Activated T-helper 1 cell treated with anti-CD3 and anti-CD28 coated beads, Interleukin-12 subunit alpha, Interleukin-12 subunit beta, Interleukin-2, Interleukin-4 antibody, amounts not matched to agents 30 ng/mL and 10 ng/mL and 1 ng/mL, durations not matched to agents 14 hours and 24 hours and 36 hours (primary cell): ENCODE measurements at regions of chr5 and their contacts with region 1.

Region 1: DNA sequence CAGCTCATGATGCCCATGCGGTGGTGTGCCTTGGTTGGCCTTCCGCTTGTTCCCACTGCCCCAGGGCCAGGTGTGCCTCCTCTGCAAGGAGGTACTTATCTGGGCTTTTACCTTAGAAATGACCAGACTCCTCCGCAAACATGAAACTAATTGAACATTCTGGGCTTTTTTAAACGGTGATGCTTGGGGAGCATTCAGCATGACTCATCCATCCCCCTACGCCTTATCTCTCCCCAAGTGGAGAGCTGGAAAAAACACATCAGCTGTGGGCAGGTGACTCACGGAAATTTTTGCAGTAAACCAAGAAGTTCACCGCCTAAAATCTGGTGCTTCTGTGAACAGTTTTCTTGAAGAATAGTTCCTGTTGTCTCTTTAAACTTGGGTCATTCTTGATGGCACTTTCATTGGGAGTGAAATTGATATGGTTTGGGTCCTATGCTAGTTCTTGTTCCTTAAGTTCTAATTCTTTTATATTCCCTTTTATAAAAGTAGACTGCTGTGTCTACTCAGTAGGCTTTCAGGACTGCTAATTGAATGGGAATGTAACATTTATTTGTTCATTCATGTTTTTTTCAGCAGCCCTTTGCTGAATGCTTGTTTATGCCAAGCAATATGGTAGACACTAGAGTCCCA is 39.6 kb downstream of the SFXN1 start:
- DNase-seq: peak; percentile 73
- H3K4me3 Mint-ChIP-seq: peak overlapping the region; percentile 74
- H3K27ac Mint-ChIP-seq: peak overlapping the region; percentile 99
- H3K4me1 Mint-ChIP-seq: peaks cover 86% of the 10 kb centered on the region
- H3K27me3 Mint-ChIP-seq: no peaks in the 10 kb centered on the region

Region 2: DNA sequence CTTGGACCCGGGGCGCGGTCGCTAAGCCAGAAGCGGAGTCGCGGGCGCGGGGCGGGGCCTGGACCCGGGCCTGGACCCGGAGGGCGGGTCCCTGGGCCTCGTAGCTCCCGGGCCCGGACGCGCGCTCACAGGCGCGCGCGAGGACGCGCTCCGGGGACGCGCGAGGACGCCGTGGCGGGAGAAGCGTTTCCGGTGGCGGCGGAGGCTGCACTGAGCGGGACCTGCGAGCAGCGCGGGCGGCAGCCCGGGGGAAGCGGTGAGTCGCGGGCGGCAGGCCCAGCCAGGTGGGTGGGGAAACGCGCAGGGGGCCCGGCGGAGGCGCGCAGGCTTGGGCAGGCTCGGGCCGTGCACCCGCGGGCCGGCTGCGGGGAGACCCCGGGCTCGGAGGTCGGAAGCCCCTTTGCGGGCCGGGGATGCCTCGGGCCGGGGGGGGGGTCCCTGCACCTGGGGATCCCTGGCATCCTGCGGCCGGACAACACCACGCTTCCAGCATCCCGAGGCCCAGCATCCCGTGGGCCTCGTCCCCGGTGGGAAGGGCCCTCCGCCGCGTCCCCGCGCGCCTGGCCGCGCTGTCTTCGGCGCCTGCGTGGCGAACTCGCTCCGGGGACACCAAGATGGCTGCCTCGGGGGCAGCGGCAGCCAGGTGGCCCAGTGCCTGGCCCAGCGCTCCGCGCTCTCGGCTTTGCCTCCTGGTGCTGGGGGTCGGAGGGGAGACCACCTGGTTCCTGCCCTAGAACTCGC is 39.4 kb before region 1 on chr5 and contains the start of gene SFXN1:
- intact Hi-C with region 1: loop called (anchors 1 kb)
- DNase-seq: peak; percentile 84
- H3K4me3 Mint-ChIP-seq: peak within 1 kb of the TSS; percentile 96
- H3K27ac Mint-ChIP-seq: peak within 1 kb of the TSS; percentile 84
- H3K4me1 Mint-ChIP-seq: peaks cover 62% of the 10 kb centered on the region
- H3K27me3 Mint-ChIP-seq: peaks cover 12% of the 10 kb centered on the region
- total RNA-seq, gene SFXN1: 394 and 397 TPM in 2 replicates

Region 3: DNA sequence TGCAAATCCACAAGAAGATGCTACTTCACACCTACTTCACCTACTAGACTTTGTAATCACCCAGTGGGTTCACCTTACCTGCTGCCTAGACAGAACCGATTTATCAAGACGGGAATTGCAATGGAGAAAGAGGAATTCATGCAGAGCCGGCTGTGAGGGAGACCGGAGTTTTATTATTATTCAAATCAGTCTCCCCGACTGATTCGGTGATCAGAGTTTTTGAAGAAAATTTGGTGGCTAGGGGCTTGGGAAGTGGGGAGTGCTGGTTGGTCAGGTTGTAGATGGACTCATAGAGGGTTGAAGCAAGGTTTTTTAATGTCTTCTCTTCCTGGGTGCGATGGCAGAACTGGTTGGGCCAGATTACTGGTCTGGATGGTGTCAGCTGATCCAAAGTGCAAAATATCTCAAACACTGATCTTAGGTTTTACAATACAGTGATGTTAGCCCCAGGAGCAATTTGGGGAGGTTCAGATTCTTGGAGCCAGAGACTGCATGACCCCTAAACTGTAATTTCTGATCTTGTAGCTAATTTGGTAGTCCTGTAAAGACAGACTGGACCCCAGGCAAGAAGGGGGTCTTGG is 16.1 kb before region 1 on chr5:
- intact Hi-C with region 1: loop called (anchors 1 kb)
- DNase-seq: no peak
- H3K4me3 Mint-ChIP-seq: no peak overlapping the region
- H3K27ac Mint-ChIP-seq: peak overlapping the region; percentile 27
- H3K4me1 Mint-ChIP-seq: peaks cover 51% of the 10 kb centered on the region
- H3K27me3 Mint-ChIP-seq: no peaks in the 10 kb centered on the region

Region 4: DNA sequence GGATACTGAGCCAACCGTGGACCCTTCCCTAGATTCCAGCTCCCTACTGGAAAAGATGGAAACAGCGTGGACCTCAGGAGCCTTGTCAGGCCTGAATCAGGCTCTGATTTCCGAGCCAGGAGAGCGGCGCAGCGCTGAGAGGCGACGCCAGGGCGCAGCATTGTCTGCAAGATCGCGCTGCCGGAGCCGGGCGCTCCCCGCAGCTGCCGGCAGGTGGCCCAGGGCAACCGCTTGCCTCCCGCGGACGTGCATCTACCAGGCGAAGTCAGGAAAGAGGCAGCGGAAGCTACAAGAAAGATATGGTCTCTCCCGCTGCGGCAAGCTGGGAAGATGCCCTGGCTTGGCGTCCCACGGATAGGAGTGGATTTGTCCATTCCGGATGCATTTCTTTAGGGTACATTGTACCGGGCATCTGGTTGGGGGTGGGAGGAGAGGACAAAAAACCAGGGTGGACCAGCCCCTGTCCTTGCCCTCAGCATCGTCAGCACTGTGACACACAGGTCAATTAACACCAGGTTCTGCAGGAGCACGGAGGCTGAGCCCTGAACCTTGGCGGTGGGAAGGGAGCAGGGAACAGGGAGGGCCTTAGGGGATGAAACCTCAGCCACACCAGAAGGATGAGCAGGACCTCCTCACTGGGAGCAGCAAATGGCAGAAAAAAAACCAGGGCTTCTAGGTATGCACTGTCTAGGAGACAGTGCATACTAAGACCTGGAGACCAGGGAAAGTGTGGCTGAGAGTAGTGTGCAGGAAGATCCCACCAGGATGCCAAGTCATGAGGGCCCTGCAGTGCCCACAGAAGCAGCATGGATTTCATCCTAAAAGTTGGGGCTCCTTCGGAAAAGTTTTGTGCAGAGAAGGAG is 16.4 kb after region 1 on chr5:
- intact Hi-C with region 1: loop called (anchors 1 kb)
- DNase-seq: peak; percentile 79
- H3K4me3 Mint-ChIP-seq: peak overlapping the region; percentile 73
- H3K27ac Mint-ChIP-seq: peak overlapping the region; percentile 78
- H3K4me1 Mint-ChIP-seq: peaks cover 68% of the 10 kb centered on the region
- H3K27me3 Mint-ChIP-seq: no peaks in the 10 kb centered on the region

Region 5: GRCh38 chr5:175696139-175696854 is 178.4 kb after region 1 on chr5:
- intact Hi-C with region 1: loop called (anchors 1 kb)
- DNase-seq: peak; percentile 63
- H3K4me3 Mint-ChIP-seq: peak overlapping the region; percentile 33
- H3K27ac Mint-ChIP-seq: peak overlapping the region; percentile 78
- H3K4me1 Mint-ChIP-seq: peaks cover 39% of the 10 kb centered on the region
- H3K27me3 Mint-ChIP-seq: no peaks in the 10 kb centered on the region

Region 6: DNA sequence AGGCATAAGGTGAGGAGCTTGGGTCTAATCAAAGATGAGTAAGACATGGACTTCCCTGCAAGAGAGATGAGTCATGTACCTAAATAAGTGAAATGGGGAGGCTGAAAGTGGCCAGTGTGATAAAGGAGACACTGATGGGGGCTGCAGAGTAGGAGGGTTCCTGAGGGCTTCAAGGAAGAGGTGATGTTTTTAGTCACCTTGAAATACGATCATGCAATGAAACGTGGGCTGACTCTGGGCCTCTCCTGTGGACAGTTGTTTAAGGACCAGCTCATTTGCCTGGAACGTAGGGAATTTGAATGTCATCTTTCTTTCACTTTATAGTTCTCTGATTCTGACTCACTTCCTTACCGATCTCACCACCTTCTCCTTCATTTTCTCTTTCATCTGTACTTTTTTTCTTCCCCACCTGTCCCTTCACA is 303.9 kb after region 1 on chr5:
- intact Hi-C with region 1: loop called (anchors 5 kb)
- DNase-seq: no peak
- H3K4me3 Mint-ChIP-seq: peak overlapping the region; percentile 5
- H3K27ac Mint-ChIP-seq: peak overlapping the region; percentile 85
- H3K4me1 Mint-ChIP-seq: peaks cover 22% of the 10 kb centered on the region
- H3K27me3 Mint-ChIP-seq: peaks cover 4% of the 10 kb centered on the region

Region 7: DNA sequence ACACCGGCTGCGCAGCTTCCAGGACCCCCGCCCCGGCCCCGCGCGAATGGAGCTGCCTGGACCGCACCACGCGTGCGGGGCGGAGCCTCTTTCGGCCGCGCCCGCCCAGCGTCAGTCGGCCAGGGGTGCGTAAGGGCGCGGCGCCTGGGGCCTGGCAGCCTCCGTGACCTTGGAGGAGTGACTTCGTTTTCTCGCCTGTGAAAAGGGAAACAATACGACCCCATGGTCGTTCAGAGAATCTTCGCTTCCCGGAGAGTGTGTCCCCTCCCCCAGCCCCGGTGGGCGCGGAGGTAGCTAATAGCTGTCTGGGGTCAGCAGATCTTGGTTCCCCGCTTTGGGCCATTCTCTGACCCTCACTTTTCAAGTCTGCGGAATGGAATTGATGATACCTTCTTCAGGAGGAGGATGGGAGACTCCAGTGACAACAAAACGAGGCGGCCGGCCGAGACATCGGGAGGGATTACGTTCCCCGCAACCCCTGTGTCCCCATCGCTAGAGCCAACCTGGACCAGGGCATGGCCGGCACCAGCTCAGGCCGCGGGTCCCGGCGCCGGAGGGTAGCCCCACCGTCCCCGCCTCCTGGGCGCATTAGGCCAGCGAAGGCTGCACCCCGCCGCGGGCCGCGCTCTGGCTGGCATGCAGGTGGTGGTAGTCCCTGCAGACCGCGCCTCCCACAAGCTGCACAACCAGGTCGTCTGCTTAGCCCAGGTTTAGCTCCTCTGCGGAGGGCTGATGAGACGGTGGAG is 1025.7 kb after region 1 on chr5:
- intact Hi-C with region 1: loop called (anchors 5 kb)
- DNase-seq: peak; percentile 74
- H3K4me3 Mint-ChIP-seq: peak overlapping the region; percentile 95
- H3K27ac Mint-ChIP-seq: peak overlapping the region; percentile 95
- H3K4me1 Mint-ChIP-seq: peaks cover 51% of the 10 kb centered on the region
- H3K27me3 Mint-ChIP-seq: no peaks in the 10 kb centered on the region